Activated CD4-positive, alpha-beta T cell treated with anti-CD3 and anti-CD28 coated beads, Interleukin-2, amount 10 ng/mL, durations not matched to agents 24 days and 14 days (primary cell): ENCODE measurements at regions of chr3 and their contacts with region 1.

Region 1: GRCh38 chr3:124078953-124079911 is 87.3 kb upstream of the ROPN1 start:
- DNase-seq: peak; percentile 68
- H3K4me3 Mint-ChIP-seq: no peak overlapping the region
- H3K27ac Mint-ChIP-seq: no peak overlapping the region
- H3K4me1 Mint-ChIP-seq: no peaks in the 10 kb centered on the region
- H3K27me3 Mint-ChIP-seq: peaks cover 8% of the 10 kb centered on the region

Region 2: DNA sequence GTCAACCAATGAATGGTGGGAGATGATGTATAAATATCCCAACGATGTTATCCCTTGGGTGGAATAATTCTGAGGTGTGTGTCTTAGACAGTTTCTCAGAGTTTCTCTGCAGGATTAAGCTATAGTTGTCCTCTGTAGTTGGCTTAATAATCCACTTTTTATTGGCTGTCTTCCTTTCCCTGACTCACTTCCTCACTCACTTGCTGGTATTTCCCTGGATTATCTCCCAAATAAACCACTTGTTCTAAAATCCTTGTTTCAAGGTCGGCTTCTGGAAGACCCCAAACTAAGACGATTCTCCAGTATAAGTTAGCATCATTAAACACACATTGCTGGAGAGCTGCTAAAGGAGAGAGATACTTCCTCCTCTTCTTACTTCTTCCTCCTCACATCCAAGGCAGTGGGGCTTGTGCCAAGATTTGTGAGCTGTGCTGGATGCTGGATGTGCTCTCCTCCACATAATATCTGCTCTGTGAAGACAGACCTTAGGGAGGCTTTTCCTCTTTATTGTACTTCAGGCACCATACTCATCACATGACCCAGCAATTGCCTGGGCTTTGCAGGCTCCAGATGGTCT is 64.8 kb before region 1 on chr3:
- intact Hi-C with region 1: loop called (anchors 2 kb)
- DNase-seq: no peak
- H3K4me3 Mint-ChIP-seq: no peak overlapping the region
- H3K27ac Mint-ChIP-seq: no peak overlapping the region
- H3K4me1 Mint-ChIP-seq: no peaks in the 10 kb centered on the region
- H3K27me3 Mint-ChIP-seq: peaks cover 41% of the 10 kb centered on the region